Prostate gland (tissue), 2 donors: ENCODE measurements at regions of chr1 and their contacts with region 1.

Region 1: GRCh38 chr1:12596007-12596821 is 21.8 kb downstream of the DHRS3 start:
- DNase-seq: peak; percentile 58
- H3K4me3 ChIP-seq: peak overlapping the region; percentile 17 to 32
- H3K27ac ChIP-seq: peak overlapping the region; percentile 89 to 90
- H3K4me1 ChIP-seq: peaks cover 64% of the 10 kb centered on the region
- H3K27me3 ChIP-seq: no peaks in the 10 kb centered on the region
- CTCF ChIP-seq: no peak
- POLR2A ChIP-seq: peak; percentile 68

Region 2: GRCh38 chr1:12454406-12455391 is 141.5 kb before region 1 on chr1:
- intact Hi-C with region 1: loop called (anchors 5 kb)
- DNase-seq: peak; percentile 62
- H3K4me3 ChIP-seq: no peak overlapping the region
- H3K27ac ChIP-seq: peak overlapping the region; percentile 78 to 81
- H3K4me1 ChIP-seq: peaks cover 39% of the 10 kb centered on the region
- H3K27me3 ChIP-seq: no peaks in the 10 kb centered on the region
- CTCF ChIP-seq: no peak
- POLR2A ChIP-seq: no peak

Region 3: DNA sequence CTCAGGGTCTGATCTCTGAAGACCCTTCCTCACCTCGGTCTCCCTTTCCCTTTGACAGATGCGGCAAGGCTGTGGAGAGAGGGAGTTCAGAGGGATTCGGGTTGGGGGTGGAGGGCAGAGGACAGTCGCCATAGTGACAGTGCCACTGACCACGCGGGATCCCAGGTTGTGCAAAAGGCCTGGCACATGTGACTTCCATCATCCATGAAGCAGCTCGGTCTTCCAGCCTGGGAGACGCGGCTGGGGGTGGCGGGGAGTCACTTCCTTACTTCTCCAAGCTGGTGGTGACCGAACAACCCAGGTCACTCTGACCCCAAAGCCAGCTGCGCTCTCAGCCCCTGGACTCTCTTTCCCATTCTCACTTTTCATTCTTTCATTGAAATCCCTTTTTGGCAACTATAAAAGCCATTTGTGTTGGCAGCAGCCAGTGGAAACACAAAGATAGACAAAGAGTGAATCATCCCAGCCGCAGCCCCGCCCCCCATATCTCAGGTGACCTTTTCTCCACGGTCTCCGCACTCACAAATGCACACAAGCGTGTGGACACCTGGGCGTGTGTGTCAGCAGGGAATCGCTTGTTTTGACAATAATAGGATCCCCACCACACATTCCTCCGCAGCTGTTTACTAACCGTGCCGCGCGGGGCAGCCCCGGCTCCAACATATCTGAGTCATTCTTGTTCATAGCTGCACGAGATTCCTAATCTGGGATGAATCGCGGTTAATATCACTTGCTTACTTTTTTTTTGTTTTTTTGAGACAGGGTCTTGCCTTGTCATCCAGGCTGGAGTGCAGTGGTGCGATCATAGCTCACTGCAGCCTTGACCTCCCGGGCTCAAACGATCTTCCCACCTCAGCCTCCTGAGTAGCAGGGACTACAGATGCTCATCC is 46.5 kb before region 1 on chr1:
- intact Hi-C with region 1: loop called (anchors 5 kb)
- DNase-seq: peak; percentile 83
- H3K4me3 ChIP-seq: no peak overlapping the region
- H3K27ac ChIP-seq: peak overlapping the region; percentile 72 to 74
- H3K4me1 ChIP-seq: peaks cover 4% of the 10 kb centered on the region
- H3K27me3 ChIP-seq: no peaks in the 10 kb centered on the region
- CTCF ChIP-seq: no peak
- POLR2A ChIP-seq: no peak

Region 4: GRCh38 chr1:12677565-12677964 is 81.4 kb after region 1 on chr1:
- intact Hi-C with region 1: no loop called
- DNase-seq: no peak
- H3K4me3 ChIP-seq: no peak overlapping the region
- H3K27ac ChIP-seq: no peak overlapping the region
- H3K4me1 ChIP-seq: no peaks in the 10 kb centered on the region
- H3K27me3 ChIP-seq: no peaks in the 10 kb centered on the region
- CTCF ChIP-seq: no peak
- POLR2A ChIP-seq: no peak